Endothelial cell of umbilical vein (primary cell): ENCODE measurements at regions of chr18 and their contacts with region 1.

Region 1: GRCh38 chr18:35290073-35290735 is at the start of gene ZSCAN30:
- DNase-seq: peak; percentile 98
- H3K4me3 ChIP-seq: peak within 1 kb of the TSS; percentile 49 to 100 (median 96)
- H3K27ac ChIP-seq: peak within 1 kb of the TSS; percentile 63
- H3K4me1 ChIP-seq: peaks cover 19% of the 10 kb centered on the region
- H3K27me3 ChIP-seq: no peaks in the 10 kb centered on the region
- CTCF ChIP-seq: no peak
- POLR2A ChIP-seq: peak; percentile 90
- total RNA-seq, gene ZSCAN30: 14.6 and 18.0 TPM in 2 replicates

Region 2: GRCh38 chr18:35231052-35231451 is 59.2 kb before region 1 on chr18:
- CTCF ChIA-PET with region 1: interaction called, 3 read pairs
- POLR2A ChIA-PET with region 1: no interaction called
- dilution Hi-C with region 1: no loop called
- intact Hi-C with region 1: loop called (anchors 2 kb)
- DNase-seq: peak; percentile 79
- H3K4me3 ChIP-seq: no peak overlapping the region
- H3K27ac ChIP-seq: no peak overlapping the region
- H3K4me1 ChIP-seq: no peaks in the 10 kb centered on the region
- H3K27me3 ChIP-seq: no peaks in the 10 kb centered on the region
- CTCF ChIP-seq: peak; percentile 78 to 82
- POLR2A ChIP-seq: no peak

Region 3: DNA sequence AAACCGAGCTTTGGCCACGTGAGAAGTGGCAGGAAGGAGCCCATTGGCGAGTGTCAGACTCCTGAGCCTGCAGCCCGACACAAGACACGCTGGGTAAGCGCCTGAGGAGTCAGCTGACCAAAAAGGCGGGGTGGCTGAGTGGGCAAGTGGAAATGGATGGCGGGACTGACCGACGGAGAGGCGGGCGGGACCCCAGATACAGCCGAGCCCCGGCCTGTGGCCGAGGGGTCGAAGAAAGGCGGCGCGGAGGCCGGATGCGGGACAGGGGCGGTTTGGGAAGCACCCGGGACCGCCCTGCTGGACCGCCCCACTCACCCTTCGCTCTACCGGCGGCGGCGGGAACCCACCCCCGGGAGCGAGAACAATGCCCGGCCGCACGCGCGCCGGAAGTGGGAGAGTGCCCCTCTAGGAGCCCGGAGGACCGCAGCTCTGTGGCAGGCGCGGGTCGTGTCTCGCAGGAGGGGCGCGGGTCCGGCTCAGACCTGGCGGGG is 23.0 kb before region 1 on chr18:
- CTCF ChIA-PET with region 1: interaction called, 3 read pairs
- POLR2A ChIA-PET with region 1: no interaction called
- dilution Hi-C with region 1: no loop called
- intact Hi-C with region 1: loop called (anchors 1 kb)
- DNase-seq: peak; percentile 66
- H3K4me3 ChIP-seq: peak overlapping the region in 2 of 3 experiments; percentile 18 to 54
- H3K27ac ChIP-seq: peak overlapping the region; percentile 60
- H3K4me1 ChIP-seq: no peaks in the 10 kb centered on the region
- H3K27me3 ChIP-seq: no peaks in the 10 kb centered on the region
- CTCF ChIP-seq: no peak
- POLR2A ChIP-seq: no peak

Region 4: DNA sequence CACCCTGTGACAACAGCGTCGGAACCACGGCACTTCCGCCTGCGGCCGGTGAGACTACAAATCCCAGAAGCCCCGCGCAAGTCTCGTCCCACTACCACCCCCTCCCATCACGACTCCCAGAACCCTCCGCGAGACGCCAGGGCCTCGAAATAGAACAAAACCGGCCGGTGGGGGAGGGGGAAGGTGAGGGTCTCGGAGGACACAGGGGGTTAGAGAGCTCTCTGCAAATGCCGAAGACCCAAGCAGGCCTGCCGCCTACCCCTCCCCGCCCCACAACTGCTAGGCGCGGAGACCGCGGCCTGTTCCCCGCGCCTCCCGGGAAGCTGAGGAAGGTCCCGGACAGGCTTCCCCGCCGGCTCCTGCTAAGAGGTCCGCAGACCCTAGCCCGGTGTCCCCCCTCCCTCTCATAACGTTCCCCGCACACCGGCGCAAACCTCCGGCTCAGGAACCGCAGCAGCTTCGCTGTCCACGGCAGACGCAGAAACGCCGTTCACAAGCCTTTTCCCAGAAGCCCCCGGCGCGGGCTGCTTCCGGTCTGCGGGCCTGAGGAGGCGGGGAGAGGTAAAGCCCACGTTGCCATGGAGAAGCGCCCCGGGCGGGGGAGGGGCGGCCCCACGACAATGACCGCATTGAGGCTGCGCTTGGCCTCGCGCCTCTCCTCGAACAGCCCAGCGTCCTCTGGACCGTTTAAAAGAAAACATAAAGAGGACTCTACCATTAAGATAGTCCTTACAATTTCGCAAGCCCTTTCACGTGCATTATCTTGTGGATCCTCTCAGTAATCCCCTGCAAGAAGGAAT is 53.9 kb after region 1 on chr18 and contains the start of gene ZNF24:
- CTCF ChIA-PET with region 1: interaction called, 3 read pairs
- POLR2A ChIA-PET with region 1: no interaction called
- dilution Hi-C with region 1: no loop called
- intact Hi-C with region 1: loop called (anchors 1 kb)
- DNase-seq: peak; percentile 92
- H3K4me3 ChIP-seq: peak within 1 kb of the TSS; percentile 69 to 97 (median 92)
- H3K27ac ChIP-seq: peak within 1 kb of the TSS; percentile 95
- H3K4me1 ChIP-seq: peaks cover 18% of the 10 kb centered on the region
- H3K27me3 ChIP-seq: no peaks in the 10 kb centered on the region
- CTCF ChIP-seq: no peak
- POLR2A ChIP-seq: peak; percentile 82
- total RNA-seq, gene ZNF24: 38.6 and 40.2 TPM in 2 replicates